Spleen (tissue), 13 donors: ENCODE measurements at regions of chr5 and their contacts with region 1.

Region 1: DNA sequence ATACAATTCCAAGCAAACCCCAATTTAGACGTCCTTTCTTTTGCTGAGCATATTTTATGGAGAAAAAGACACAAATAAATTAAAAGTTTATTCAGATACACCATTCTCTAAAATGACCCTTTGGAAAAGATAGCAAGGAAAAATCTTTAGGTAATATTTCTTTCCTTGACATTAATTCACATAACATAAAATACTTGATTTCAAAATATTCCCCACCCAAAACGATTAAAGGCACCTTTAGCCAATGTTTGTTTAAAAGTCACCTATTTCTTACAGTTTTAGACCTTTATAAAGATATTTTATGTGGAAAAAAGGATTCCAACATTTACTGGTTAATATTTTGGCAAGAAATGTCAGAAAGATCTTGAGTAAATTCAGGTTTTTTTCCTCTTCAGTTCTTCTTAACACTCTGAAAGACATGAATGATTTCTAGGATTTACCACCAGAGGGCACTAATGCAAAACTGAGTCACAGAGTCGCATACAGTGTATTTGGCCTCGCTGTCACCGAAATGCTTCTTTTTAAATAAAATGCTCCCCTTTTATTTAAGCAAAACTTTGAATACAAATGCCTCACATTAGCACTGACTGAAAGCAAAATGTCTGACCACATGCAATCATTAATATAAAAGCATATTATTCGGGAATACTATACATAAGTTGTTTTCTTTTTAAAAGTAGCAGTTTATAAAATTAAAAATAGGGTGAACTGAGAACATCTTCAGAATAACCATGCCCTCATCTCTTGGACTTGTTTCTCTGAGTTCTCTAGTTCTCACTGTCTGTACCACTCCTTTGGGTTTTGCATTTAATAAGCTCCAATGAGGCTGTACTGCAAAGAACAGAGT is 122.5 kb downstream of the SLC1A3 start:
- DNase-seq: no peak
- H3K4me3 ChIP-seq: no peak overlapping the region
- H3K27ac ChIP-seq: no peak overlapping the region
- H3K4me1 ChIP-seq: peaks cover 0 to 28% (median 17%) of the 10 kb centered on the region in 6 donors
- H3K27me3 ChIP-seq: no peaks in the 10 kb centered on the region
- CTCF ChIP-seq: peak; percentile 13 to 77 (median 54)
- POLR2A ChIP-seq: no peak

Region 2: DNA sequence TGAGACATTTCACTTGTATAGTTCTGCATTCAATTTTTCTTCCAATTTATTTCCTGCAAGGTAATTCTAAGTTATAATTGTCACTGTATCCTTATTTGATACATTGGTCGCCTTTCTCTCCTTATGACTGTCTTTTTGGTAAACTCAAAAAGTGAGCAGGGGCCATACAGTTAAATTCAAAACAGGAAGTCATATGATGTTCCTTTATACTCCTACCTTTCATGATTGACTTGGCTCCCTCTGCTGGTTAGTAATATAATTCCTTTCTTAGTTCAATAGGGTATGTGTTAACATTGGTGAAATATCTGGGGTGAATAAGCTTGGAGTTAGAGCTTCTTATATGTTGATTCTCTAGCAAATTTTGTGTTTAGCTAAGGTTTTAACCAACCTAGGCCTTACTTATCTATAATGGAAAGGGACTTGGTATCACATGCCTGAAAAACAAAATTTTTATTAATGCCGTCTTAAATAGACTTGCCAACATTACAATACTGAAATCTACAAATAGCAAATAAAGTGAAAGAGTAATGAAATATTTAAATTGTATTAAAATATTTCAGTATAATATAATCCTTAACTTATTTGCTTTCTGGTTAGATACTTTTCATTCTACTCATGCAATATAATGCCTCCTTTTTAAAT is 141.6 kb after region 1 on chr5:
- intact Hi-C with region 1: loop called (anchors 5 kb)
- DNase-seq: no peak
- H3K4me3 ChIP-seq: no peak overlapping the region
- H3K27ac ChIP-seq: no peak overlapping the region
- H3K4me1 ChIP-seq: peaks cover 25 to 60% (median 50%) of the 10 kb centered on the region in 6 donors
- H3K27me3 ChIP-seq: no peaks in the 10 kb centered on the region
- CTCF ChIP-seq: peak in 10 of 11 experiments; percentile 42 to 78 (median 70)
- POLR2A ChIP-seq: no peak

Region 3: GRCh38 chr5:37005946-37006540 is 277.1 kb after region 1 on chr5:
- intact Hi-C with region 1: loop called (anchors 5 kb)
- DNase-seq: no peak
- H3K4me3 ChIP-seq: no peak overlapping the region
- H3K27ac ChIP-seq: no peak overlapping the region
- H3K4me1 ChIP-seq: no peaks in the 10 kb centered on the region
- H3K27me3 ChIP-seq: no peaks in the 10 kb centered on the region
- CTCF ChIP-seq: peak in 8 of 11 experiments; percentile 30 to 57 (median 42)
- POLR2A ChIP-seq: no peak